ENCODE measurements at regions of chr12 and their contacts with region 1.

Region 1: DNA sequence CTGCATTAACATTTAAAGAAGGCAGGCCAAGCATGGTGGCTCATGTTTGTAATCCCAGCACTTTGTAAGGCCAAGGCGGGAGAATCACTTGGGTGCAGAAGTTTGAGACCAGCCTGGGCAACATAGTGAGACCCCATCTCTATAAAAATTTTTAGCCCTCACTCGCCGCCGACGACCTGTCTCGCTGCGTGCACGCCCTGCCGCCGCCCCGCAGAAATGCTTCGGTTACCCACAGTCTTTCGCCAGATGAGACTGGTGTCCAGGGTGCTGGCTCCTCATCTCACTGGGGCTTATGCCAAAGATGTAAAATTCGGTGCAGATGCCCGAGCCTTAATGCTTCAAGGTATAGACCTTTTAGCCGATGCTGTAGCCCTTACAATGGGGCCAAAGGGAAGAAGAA is 10.8 kb upstream of the RBMS2 start:
- DNase-seq: no peak
- H3K4me3 Mint-ChIP-seq: no peak overlapping the region
- H3K27ac Mint-ChIP-seq: no peak overlapping the region
- H3K4me1 Mint-ChIP-seq: peaks cover 1% of the 10 kb centered on the region
- H3K27me3 Mint-ChIP-seq: no peaks in the 10 kb centered on the region

Region 2: GRCh38 chr12:56476972-56477432 is 33.8 kb before region 1 on chr12:
- CTCF ChIA-PET with region 1: no interaction called
- POLR2A ChIA-PET with region 1: no interaction called
- intact Hi-C with region 1: no loop called
- DNase-seq: no peak
- H3K4me3 Mint-ChIP-seq: no peak overlapping the region
- H3K27ac Mint-ChIP-seq: no peak overlapping the region
- H3K4me1 Mint-ChIP-seq: peaks cover 9% of the 10 kb centered on the region
- H3K27me3 Mint-ChIP-seq: no peaks in the 10 kb centered on the region

Region 3: DNA sequence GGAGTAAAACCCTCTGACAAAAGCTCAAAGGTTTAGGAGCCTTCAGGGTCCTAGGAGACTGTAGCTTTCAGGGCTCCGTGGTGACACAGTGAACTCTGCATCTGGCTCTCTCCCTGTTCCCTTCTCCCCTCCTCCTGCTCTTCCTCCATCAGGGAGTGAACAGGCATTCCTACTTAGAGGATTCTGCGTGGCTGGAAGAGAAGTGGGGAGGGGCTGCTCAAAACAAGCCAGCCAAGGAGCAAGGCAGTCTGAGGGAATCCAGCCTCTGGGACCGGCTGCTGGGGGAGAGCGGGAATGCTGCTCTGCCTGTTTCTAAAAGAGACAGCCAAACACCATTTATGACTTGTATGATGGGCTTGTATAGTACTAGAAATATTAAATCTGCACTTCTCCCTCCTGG is 60.3 kb after region 1 on chr12:
- CTCF ChIA-PET with region 1: interaction called, 32 read pairs
- POLR2A ChIA-PET with region 1: interaction called, 3 read pairs
- intact Hi-C with region 1: loop called (anchors 1 kb)
- DNase-seq: no peak
- H3K4me3 Mint-ChIP-seq: no peak overlapping the region
- H3K27ac Mint-ChIP-seq: no peak overlapping the region
- H3K4me1 Mint-ChIP-seq: peaks cover 23% of the 10 kb centered on the region
- H3K27me3 Mint-ChIP-seq: no peaks in the 10 kb centered on the region

Region 4: GRCh38 chr12:56593909-56594621 is 83.3 kb after region 1 on chr12:
- CTCF ChIA-PET with region 1: interaction called, 84 read pairs
- POLR2A ChIA-PET with region 1: no interaction called
- intact Hi-C with region 1: loop called (anchors 1 kb)
- DNase-seq: peak; percentile 68
- H3K4me3 Mint-ChIP-seq: no peak overlapping the region
- H3K27ac Mint-ChIP-seq: no peak overlapping the region
- H3K4me1 Mint-ChIP-seq: no peaks in the 10 kb centered on the region
- H3K27me3 Mint-ChIP-seq: no peaks in the 10 kb centered on the region

Region 5: GRCh38 chr12:57111031-57111734 is 600.4 kb after region 1 on chr12 and contains the start of gene STAT6:
- CTCF ChIA-PET with region 1: no interaction called
- POLR2A ChIA-PET with region 1: no interaction called
- intact Hi-C with region 1: no loop called
- DNase-seq: peak; percentile 89
- H3K4me3 Mint-ChIP-seq: peak within 1 kb of the TSS; percentile 90
- H3K27ac Mint-ChIP-seq: peak within 1 kb of the TSS; percentile 95
- H3K4me1 Mint-ChIP-seq: peaks cover 49% of the 10 kb centered on the region
- H3K27me3 Mint-ChIP-seq: no peaks in the 10 kb centered on the region
- total RNA-seq, gene STAT6: 209 to 218 TPM

Measured in activated CD4-positive, alpha-beta memory T cell treated with anti-CD3 and anti-CD28 coated beads for 36 hours (primary cell).